B cell (primary cell): ENCODE measurements at regions of chr12 and their contacts with region 1.

Region 1: DNA sequence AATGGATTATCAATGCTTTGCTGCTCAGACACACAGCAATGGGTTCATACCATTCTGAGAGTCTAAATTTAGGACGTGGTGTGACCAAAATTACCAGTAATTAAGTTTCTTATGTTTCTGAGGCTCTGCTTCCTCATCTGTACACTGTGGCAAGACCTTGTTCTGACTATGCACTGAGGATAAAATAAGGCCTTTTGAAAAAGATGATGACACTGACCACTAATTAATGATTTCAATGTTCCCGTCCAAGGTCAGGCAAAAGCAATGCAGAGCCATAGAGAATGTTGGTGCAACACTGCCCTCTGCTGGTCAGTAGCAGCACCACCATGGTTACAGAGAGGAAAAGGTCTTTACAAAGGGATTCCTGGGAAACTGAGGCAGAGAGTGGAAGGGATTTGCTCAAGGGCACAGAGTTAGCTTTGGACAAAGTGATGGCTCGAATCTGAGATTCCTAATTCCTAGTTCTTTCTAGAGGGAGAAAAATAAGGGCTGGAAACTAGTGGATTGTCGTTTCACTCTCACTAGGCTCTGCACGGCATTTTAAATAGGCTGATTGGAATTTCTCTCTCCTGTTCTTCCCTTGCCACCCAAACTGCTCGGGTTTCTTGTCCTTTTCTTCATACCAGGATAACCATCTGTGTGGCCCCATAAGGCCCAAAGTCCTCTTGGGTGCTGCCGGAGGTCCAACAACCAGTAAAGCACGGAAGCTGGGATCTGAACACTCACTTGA is 22.3 kb upstream of the P2RX7 start:
- DNase-seq: peak; percentile 78
- ATAC-seq: peak; percentile 71
- H3K4me3 ChIP-seq: no peak overlapping the region
- H3K4me3 Mint-ChIP-seq: no peak overlapping the region
- H3K27ac ChIP-seq: no peak overlapping the region
- H3K27ac Mint-ChIP-seq: no peak overlapping the region
- H3K4me1 ChIP-seq: peaks cover 0 to 6% of the 10 kb centered on the region in 2 donors
- H3K4me1 Mint-ChIP-seq: peaks cover 4% of the 10 kb centered on the region
- H3K27me3 ChIP-seq: no peaks in the 10 kb centered on the region
- H3K27me3 Mint-ChIP-seq: no peaks in the 10 kb centered on the region
- CTCF ChIP-seq: peak; percentile 99

Region 2: DNA sequence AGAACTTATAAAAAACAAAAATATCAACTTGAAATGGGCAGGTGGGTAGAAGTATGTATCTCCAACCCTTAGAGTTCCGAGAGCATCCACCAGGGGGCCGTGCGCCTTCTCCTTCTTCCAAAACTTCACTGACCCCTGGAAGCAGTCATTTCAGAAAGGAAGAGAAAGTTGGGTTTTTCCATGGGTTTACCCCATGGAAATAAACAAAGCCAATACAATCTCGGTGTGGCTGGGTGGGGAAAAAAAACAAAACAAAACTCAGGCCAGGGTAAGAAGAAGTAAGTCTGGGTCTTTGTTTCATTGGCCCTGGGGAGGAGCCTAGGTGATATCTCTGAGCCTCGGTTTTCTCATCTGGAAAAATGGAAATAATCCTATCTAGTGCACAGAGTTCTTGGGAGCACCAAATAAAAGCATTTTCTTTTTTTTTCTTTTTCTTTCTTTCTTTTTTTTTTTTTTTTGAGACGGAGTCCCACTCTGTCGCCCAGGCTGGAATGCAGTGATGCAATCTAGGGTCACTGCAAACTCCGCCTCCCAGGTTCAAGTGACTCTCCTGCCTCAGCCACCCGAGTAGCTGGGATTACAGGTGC is 165.6 kb before region 1 on chr12:
- CTCF ChIA-PET with region 1: interaction called, 6 read pairs
- POLR2A ChIA-PET with region 1: no interaction called
- intact Hi-C with region 1: loop called (anchors 5 kb)
- DNase-seq: peak; percentile 59
- ATAC-seq: no peak
- H3K4me3 ChIP-seq: no peak overlapping the region
- H3K4me3 Mint-ChIP-seq: no peak overlapping the region
- H3K27ac ChIP-seq: no peak overlapping the region
- H3K27ac Mint-ChIP-seq: no peak overlapping the region
- H3K4me1 ChIP-seq: no peaks in the 10 kb centered on the region
- H3K4me1 Mint-ChIP-seq: no peaks in the 10 kb centered on the region
- H3K27me3 ChIP-seq: no peaks in the 10 kb centered on the region
- H3K27me3 Mint-ChIP-seq: peaks cover 11% of the 10 kb centered on the region
- CTCF ChIP-seq: peak; percentile 71

Region 3: DNA sequence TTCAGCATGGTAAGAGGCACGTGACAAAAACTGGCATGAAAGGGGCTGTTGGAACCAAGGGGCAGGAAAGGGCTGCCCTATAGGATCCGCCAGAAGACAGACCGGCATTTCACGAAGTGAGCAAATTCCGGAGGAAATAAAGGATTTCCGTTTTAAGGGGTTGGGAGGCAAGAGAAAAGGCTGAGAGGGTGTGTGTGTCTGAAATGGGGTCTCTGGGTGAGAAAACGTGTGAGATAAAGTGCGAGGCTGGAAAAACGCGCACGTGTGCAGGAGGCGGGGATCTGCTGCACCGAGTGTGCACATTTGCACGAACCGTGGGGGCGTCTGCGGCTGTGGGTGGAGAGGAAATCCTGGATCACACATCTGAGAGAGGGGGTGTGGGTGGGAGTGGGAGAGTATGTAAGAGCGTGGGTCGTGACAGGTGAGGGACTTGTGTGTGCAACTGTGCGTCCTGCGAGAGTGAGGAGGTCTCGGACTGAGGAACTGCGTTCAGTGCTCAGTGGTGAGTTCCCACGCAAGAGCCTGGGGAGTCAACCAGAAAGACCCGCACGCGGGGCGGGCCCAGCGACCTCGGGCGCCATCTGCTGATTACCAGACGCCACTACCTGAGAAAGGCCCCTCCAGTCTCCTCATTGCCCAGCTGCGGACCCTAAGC is 14.7 kb before region 1 on chr12:
- CTCF ChIA-PET with region 1: interaction called, 11 read pairs
- POLR2A ChIA-PET with region 1: no interaction called
- intact Hi-C with region 1: loop called (anchors 1 kb)
- DNase-seq: peak; percentile 86
- ATAC-seq: peak; percentile 97
- H3K4me3 ChIP-seq: peak overlapping the region in 4 of 5 experiments; percentile 31 to 59 (median 48)
- H3K4me3 Mint-ChIP-seq: peak overlapping the region; percentile 87
- H3K27ac ChIP-seq: no peak overlapping the region
- H3K27ac Mint-ChIP-seq: peak overlapping the region; percentile 5
- H3K4me1 ChIP-seq: peaks cover 15 to 20% of the 10 kb centered on the region in 2 donors
- H3K4me1 Mint-ChIP-seq: peaks cover 26% of the 10 kb centered on the region
- H3K27me3 ChIP-seq: peaks cover 0 to 5% (median 0%) of the 10 kb centered on the region in 4 experiments
- H3K27me3 Mint-ChIP-seq: peaks cover 13% of the 10 kb centered on the region
- CTCF ChIP-seq: peak; percentile 92

Region 4: GRCh38 chr12:121209624-121210572 is 99.5 kb after region 1 on chr12 and contains the start of gene P2RX4:
- CTCF ChIA-PET with region 1: no interaction called
- POLR2A ChIA-PET with region 1: no interaction called
- intact Hi-C with region 1: loop called (anchors 2 kb)
- DNase-seq: peak; percentile 94
- ATAC-seq: peak; percentile 90
- H3K4me3 ChIP-seq: peak within 1 kb of the TSS in 4 of 5 experiments; percentile 70 to 85 (median 76)
- H3K4me3 Mint-ChIP-seq: peak within 1 kb of the TSS; percentile 88
- H3K27ac ChIP-seq: peak within 1 kb of the TSS; percentile 72 to 89
- H3K27ac Mint-ChIP-seq: peak within 1 kb of the TSS; percentile 88
- H3K4me1 ChIP-seq: peaks cover 4 to 13% of the 10 kb centered on the region in 2 donors
- H3K4me1 Mint-ChIP-seq: peaks cover 14% of the 10 kb centered on the region
- H3K27me3 ChIP-seq: no peaks in the 10 kb centered on the region
- H3K27me3 Mint-ChIP-seq: no peaks in the 10 kb centered on the region
- CTCF ChIP-seq: peak; percentile 36
- total RNA-seq, gene P2RX4: 27.2 and 30.4 TPM in 2 replicates

Region 5: DNA sequence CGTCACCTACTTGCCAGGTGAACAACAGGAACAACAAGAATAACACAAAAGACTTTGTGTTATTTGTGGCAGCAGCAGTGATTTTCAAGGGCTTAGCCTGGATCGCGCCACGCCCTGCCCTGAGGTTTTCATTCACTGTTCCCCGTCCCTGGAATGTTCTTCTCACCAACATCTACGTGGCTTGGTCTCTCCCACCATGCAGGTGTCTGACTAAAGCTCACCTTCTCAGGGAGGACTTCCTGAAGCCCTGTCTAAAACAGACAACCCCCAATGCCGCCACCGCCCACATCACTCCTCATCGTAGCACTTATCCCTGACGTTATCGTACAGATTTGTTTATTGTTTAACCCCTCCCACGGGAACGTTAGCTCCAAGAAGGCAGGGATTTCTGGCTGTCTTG is 140.0 kb after region 1 on chr12:
- CTCF ChIA-PET with region 1: no interaction called
- POLR2A ChIA-PET with region 1: no interaction called
- intact Hi-C with region 1: no loop called
- DNase-seq: no peak
- ATAC-seq: no peak
- H3K4me3 ChIP-seq: no peak overlapping the region
- H3K4me3 Mint-ChIP-seq: no peak overlapping the region
- H3K27ac ChIP-seq: no peak overlapping the region
- H3K27ac Mint-ChIP-seq: peak overlapping the region; percentile 10
- H3K4me1 ChIP-seq: peaks cover 11 to 22% of the 10 kb centered on the region in 2 donors
- H3K4me1 Mint-ChIP-seq: peaks cover 13% of the 10 kb centered on the region
- H3K27me3 ChIP-seq: no peaks in the 10 kb centered on the region
- H3K27me3 Mint-ChIP-seq: no peaks in the 10 kb centered on the region
- CTCF ChIP-seq: no peak

Region 6: DNA sequence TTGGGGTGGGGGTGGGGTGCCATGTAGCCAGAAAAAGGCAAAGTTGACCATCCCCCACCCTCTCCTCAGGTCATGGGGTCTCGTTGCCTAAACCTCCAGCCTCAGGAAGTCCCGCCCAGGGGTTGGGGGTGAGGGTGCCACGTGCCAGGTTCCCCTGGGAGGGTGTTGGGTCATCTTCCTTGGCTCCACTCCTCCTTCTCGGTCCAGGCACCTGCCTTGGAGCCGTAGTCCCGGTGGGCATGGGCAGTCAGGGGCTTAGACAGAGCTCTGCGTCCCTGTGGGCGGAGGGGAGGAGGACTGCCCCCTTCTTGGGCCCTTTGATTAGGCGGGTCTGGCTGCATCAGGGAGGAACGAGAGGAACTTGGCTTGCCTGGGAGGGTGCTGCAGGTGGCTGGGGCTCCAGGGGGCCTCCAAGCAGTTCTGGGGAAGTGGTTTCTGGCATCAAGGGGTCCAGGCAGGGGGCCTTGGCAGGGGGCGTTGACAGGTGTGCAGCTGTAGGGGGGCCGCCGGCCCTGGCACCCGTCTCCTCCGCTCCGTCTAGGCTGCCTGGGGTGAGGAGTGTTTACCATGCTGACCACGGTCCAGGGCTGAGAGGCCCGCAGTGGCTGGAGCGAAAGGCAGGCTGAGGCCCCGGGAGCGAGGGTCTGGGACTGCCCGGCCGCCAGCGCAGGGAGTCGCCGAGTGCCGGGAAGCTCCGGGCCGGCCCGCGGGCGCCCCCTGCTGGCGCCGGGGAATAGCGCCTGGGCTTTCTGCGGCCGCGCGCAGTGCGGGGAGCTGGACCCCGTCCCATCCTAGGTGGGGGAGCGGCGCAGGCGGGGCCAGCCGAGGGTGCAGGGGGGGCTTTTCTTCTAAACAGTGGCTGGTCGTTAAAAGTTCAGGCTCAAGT is 701.3 kb after region 1 on chr12:
- CTCF ChIA-PET with region 1: no interaction called
- POLR2A ChIA-PET with region 1: no interaction called
- intact Hi-C with region 1: no loop called
- DNase-seq: peak; percentile 81
- ATAC-seq: peak; percentile 78
- H3K4me3 ChIP-seq: peak overlapping the region; percentile 11 to 53 (median 47)
- H3K4me3 Mint-ChIP-seq: peak overlapping the region; percentile 84
- H3K27ac ChIP-seq: peak overlapping the region; percentile 11 to 61
- H3K27ac Mint-ChIP-seq: peak overlapping the region; percentile 87
- H3K4me1 ChIP-seq: peaks cover 42 to 51% of the 10 kb centered on the region in 2 donors
- H3K4me1 Mint-ChIP-seq: peaks cover 48% of the 10 kb centered on the region
- H3K27me3 ChIP-seq: no peaks in the 10 kb centered on the region
- H3K27me3 Mint-ChIP-seq: no peaks in the 10 kb centered on the region
- CTCF ChIP-seq: peak; percentile 100